ENCODE measurements at regions of chr10 and their contacts with region 1.

Region 1: GRCh38 chr10:74081192-74081803 is 69.3 kb downstream of the AP3M1 start:
- DNase-seq: peak in 1 of 2 experiments; percentile 46
- H3K4me3 ChIP-seq: no peak overlapping the region
- H3K27ac ChIP-seq: peak overlapping the region; percentile 66; the same call in 1 of the 2 replicates
- H3K4me1 ChIP-seq: peaks cover 43% of the 10 kb centered on the region
- H3K27me3 ChIP-seq: no peaks in the 10 kb centered on the region
- CTCF ChIP-seq: peak; percentile 87

Region 2: GRCh38 chr10:73940634-73941221 is 140.6 kb before region 1 on chr10:
- CTCF ChIA-PET with region 1: interaction called, 4 read pairs
- POLR2A ChIA-PET with region 1: no interaction called
- intact Hi-C with region 1: loop called (anchors 2 kb)
- DNase-seq: peak; percentile 57 to 87
- H3K4me3 ChIP-seq: peak overlapping the region; percentile 44; the same call in 1 of the 2 replicates
- H3K27ac ChIP-seq: peak overlapping the region; percentile 64
- H3K4me1 ChIP-seq: peaks cover 38% of the 10 kb centered on the region
- H3K27me3 ChIP-seq: no peaks in the 10 kb centered on the region
- CTCF ChIP-seq: peak; percentile 96

Region 3: DNA sequence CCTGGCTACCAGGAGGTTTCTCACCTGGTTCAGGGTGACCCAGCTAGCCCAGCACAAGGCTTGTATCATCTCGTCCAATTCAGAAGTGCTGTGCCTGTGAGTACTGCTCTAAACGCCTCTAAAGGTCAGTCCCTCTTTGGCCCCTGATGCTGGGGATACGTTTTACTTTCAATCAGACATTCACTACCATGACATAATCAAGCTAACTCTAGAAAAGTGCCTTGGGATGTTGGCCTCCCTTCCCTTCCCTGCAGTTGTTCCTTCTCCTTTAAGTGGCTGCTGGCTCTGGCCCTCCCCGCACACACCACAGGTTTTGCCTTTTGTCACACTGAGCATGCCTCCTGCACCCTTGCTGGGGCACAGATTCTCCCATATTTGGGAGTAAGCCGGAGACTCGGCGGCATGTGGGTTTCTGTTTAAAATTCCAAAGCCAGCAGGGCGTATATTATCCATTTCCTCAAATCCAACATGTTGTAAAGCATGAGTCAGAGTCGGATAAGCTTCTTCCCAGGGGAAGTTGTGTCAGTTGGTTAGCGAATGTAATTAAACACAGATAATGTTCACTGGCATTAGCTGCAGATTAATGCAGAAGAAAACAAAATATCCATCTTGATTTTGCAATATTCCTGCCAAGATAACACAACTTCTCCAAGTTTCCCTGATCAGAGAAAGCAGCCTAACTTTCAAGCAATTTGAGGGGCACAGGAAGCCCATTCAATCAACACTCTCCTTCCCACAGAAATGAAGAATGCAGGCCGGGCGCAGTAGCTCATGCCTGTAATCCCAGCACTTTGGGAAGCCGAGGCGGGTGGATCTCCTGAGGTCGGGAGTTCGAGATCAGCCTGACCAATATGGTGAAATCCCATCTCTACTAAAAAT is 115.2 kb before region 1 on chr10:
- CTCF ChIA-PET with region 1: interaction called, 3 read pairs
- POLR2A ChIA-PET with region 1: interaction called, 10 read pairs
- intact Hi-C with region 1: no loop called
- DNase-seq: peak; percentile 93 to 99
- H3K4me3 ChIP-seq: peak overlapping the region; percentile 43; the same call in 1 of the 2 replicates
- H3K27ac ChIP-seq: peak overlapping the region; percentile 99
- H3K4me1 ChIP-seq: peaks cover 38% of the 10 kb centered on the region
- H3K27me3 ChIP-seq: no peaks in the 10 kb centered on the region
- CTCF ChIP-seq: no peak

Region 4: DNA sequence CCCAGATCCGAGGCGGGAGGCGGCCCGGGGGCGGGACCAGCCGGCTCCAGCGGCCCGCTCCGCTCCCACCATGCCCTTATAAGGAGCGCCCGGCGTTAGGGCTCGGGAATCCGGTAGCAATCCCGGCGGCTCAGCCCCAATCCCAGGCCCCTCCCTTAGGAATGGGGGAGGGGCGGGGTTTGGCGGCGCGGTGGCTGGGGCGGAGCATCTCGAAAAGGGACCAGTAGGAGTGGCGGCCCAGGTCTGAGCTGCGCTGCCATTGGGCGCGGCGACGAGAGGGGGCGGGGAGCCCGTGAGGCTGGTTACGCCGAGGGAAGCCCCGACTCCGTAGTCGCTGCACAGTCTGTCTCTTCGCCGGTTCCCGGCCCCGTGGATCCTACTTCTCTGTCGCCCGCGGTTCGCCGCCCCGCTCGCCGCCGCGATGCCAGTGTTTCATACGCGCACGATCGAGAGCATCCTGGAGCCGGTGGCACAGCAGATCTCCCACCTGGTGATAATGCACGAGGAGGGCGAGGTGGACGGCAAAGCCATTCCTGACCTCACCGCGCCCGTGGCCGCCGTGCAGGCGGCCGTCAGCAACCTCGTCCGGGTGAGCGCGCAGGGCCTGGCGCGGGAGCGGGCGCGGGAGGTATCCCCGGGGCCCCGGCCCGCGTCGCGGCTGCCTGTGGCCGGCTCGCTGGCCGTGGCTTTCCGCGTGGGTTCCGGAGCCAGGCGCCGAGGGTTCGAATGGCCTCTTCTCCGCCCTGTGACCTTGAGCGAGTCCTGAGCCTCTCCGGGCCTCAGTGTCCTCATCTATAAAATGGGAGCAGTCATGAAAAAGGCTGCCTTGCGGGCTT is 83.3 kb before region 1 on chr10 and contains the start of gene VCL:
- CTCF ChIA-PET with region 1: no interaction called
- POLR2A ChIA-PET with region 1: interaction called, 3 read pairs
- intact Hi-C with region 1: loop called (anchors 2 kb)
- DNase-seq: peak; percentile 93 to 100
- H3K4me3 ChIP-seq: peak within 1 kb of the TSS; percentile 90
- H3K27ac ChIP-seq: peak within 1 kb of the TSS; percentile 79
- H3K4me1 ChIP-seq: peaks cover 41% of the 10 kb centered on the region
- H3K27me3 ChIP-seq: no peaks in the 10 kb centered on the region
- CTCF ChIP-seq: no peak
- total RNA-seq, gene VCL: 208 and 225 TPM in 2 replicates

Region 5: DNA sequence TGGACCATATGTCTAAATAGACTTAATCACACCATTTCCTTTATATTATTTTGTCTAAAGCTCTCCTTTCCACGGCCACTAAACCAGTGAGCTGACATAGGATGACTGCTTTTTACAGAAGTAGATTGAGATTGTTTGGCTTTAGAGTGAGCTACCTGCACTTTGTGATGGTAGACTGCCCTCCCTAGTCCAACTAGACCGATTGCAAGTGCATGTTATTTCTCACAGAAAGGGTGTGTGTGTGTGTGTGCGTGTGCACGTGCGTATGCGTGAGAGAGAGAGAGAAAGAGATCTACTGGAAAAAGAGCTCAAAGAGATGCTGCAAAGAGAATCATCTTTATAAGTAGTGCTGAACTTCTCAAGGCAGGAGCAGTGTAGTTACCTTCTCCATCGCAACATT is 22.6 kb before region 1 on chr10:
- CTCF ChIA-PET with region 1: no interaction called
- POLR2A ChIA-PET with region 1: no interaction called
- intact Hi-C with region 1: loop called (anchors 2 kb)
- DNase-seq: no peak
- H3K4me3 ChIP-seq: no peak overlapping the region
- H3K27ac ChIP-seq: peak overlapping the region; percentile 92; the same call in 1 of the 2 replicates
- H3K4me1 ChIP-seq: peaks cover 50% of the 10 kb centered on the region
- H3K27me3 ChIP-seq: no peaks in the 10 kb centered on the region
- CTCF ChIP-seq: no peak; the same call in 1 of the 2 replicates

Region 6: DNA sequence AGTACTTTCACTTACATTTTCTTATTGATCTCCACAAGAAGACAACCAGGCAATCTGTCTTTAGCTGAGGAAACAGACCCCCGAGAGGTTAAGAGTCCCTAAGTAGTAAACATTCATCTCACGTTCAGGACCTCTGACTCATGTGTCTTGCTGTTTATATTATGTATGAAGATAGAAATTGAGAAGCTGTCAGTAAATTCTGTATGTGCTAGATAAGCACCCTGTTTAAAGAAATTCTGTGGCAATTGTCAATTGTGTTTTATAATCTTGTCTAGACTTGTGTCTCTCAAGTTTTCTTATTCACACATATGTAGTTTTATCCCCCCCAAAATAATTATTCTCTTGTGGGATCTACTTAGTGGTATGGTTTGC is 84.2 kb after region 1 on chr10:
- CTCF ChIA-PET with region 1: no interaction called
- POLR2A ChIA-PET with region 1: no interaction called
- intact Hi-C with region 1: no loop called
- DNase-seq: no peak
- H3K4me3 ChIP-seq: no peak overlapping the region
- H3K27ac ChIP-seq: no peak overlapping the region
- H3K4me1 ChIP-seq: no peaks in the 10 kb centered on the region
- H3K27me3 ChIP-seq: no peaks in the 10 kb centered on the region
- CTCF ChIP-seq: no peak